MCF 10A (cell line): ENCODE measurements at regions of chr2 and their contacts with region 1.

Region 1: GRCh38 chr2:170409164-170409535 is 231.2 kb downstream of the MYO3B start:
- DNase-seq: peak; percentile 72
- H3K4me3 Mint-ChIP-seq: peak overlapping the region; percentile 54
- H3K27ac Mint-ChIP-seq: no peak overlapping the region
- H3K4me1 Mint-ChIP-seq: peaks cover 8% of the 10 kb centered on the region
- H3K27me3 Mint-ChIP-seq: peaks cover 22% of the 10 kb centered on the region
- CTCF ChIP-seq: peak; percentile 81

Region 2: GRCh38 chr2:170386554-170386953 is 22.6 kb before region 1 on chr2:
- CTCF ChIA-PET with region 1: interaction called, 24 read pairs
- POLR2A ChIA-PET with region 1: no interaction called
- intact Hi-C with region 1: no loop called
- DNase-seq: no peak
- H3K4me3 Mint-ChIP-seq: no peak overlapping the region
- H3K27ac Mint-ChIP-seq: no peak overlapping the region
- H3K4me1 Mint-ChIP-seq: no peaks in the 10 kb centered on the region
- H3K27me3 Mint-ChIP-seq: peaks cover 11% of the 10 kb centered on the region
- CTCF ChIP-seq: no peak

Region 3: GRCh38 chr2:170425281-170425751 is 16.2 kb after region 1 on chr2:
- CTCF ChIA-PET with region 1: interaction called, 59 read pairs
- POLR2A ChIA-PET with region 1: no interaction called
- intact Hi-C with region 1: no loop called
- DNase-seq: peak; percentile 75
- H3K4me3 Mint-ChIP-seq: no peak overlapping the region
- H3K27ac Mint-ChIP-seq: no peak overlapping the region
- H3K4me1 Mint-ChIP-seq: no peaks in the 10 kb centered on the region
- H3K27me3 Mint-ChIP-seq: peaks cover 11% of the 10 kb centered on the region
- CTCF ChIP-seq: no peak

Region 4: GRCh38 chr2:170715062-170715931 is 306.1 kb after region 1 on chr2 and contains the start of gene SP5:
- CTCF ChIA-PET with region 1: interaction called, 3 read pairs
- POLR2A ChIA-PET with region 1: no interaction called
- intact Hi-C with region 1: loop called (anchors 5 kb)
- DNase-seq: peak; percentile 62
- H3K4me3 Mint-ChIP-seq: peak within 1 kb of the TSS; percentile 69
- H3K27ac Mint-ChIP-seq: peak within 1 kb of the TSS; percentile 4
- H3K4me1 Mint-ChIP-seq: no peaks in the 10 kb centered on the region
- H3K27me3 Mint-ChIP-seq: peaks cover 44% of the 10 kb centered on the region
- CTCF ChIP-seq: no peak
- total RNA-seq, gene SP5: not detected in 2 replicates

Region 5: GRCh38 chr2:170806548-170806947 is 397.4 kb after region 1 on chr2:
- CTCF ChIA-PET with region 1: interaction called, 125 read pairs
- POLR2A ChIA-PET with region 1: interaction called, 3 read pairs
- intact Hi-C with region 1: no loop called
- DNase-seq: no peak
- H3K4me3 Mint-ChIP-seq: no peak overlapping the region
- H3K27ac Mint-ChIP-seq: no peak overlapping the region
- H3K4me1 Mint-ChIP-seq: no peaks in the 10 kb centered on the region
- H3K27me3 Mint-ChIP-seq: no peaks in the 10 kb centered on the region
- CTCF ChIP-seq: no peak